T-cell (primary cell): ENCODE measurements at regions of chr5 and their contacts with region 1.

Region 1: GRCh38 chr5:35651002-35651756 is 33.5 kb downstream of the SPEF2 start:
- DNase-seq: peak; percentile 15 to 79 (median 58)
- ATAC-seq: peak; percentile 86 to 96 (median 94)
- H3K4me3 ChIP-seq: no peak overlapping the region
- H3K4me3 Mint-ChIP-seq: no peak overlapping the region
- H3K27ac ChIP-seq: no peak overlapping the region
- H3K27ac Mint-ChIP-seq: peak overlapping the region; percentile 45 to 66
- H3K4me1 ChIP-seq: peaks cover 0 to 4% of the 10 kb centered on the region in 2 experiments
- H3K4me1 Mint-ChIP-seq: peaks cover 6 to 9% (median 8%) of the 10 kb centered on the region in 3 donors
- H3K27me3 ChIP-seq: no peaks in the 10 kb centered on the region
- H3K27me3 Mint-ChIP-seq: no peaks in the 10 kb centered on the region

Region 2: DNA sequence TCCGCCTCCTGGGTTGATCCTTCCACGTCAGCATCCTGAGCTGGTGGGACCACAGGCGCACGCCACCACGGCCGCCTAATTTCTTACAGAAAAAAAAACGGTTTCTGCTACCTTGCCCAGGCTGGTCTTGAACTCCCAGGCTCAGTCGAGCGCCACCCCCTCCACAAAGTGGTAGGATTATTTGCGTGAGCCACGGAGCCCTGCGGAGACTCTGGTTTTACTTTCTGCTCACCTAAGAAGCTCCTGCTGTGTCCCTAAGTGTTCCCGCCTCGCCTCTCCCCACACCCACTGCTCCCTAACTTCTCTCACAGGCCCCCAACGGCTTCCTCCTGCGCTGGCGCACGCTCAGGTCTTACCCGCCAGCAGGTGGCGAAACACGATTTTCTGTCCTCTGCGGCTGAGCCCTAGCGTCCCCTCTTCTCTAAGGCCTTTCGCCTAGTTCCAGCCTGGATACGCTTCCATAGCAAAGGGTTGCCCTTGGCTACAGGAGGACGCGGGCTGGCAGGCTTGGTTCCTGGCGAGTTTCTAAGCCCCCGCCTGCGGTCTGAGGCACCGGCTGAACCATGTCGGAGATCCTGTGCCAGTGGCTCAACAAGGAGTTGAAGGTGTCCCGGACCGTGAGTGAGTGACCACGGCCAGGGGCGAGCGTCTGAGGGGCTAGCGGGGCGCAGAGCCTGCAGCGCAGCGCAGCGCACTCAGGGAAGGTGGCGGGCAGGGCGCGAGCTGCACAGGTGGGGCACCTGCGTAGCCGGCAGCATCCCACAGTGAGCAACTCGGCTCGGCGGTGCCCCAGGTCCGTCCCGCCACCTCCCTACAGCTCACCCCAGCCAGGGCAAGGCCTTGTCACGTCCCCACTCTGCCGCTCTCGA is 33.5 kb before region 1 on chr5 and contains the start of gene SPEF2:
- CTCF ChIA-PET with region 1: interaction called, 3 to 11 read pairs
- POLR2A ChIA-PET with region 1: no interaction called
- DNase-seq: peak; percentile 61 to 86 (median 71)
- ATAC-seq: peak; percentile 89 to 91 (median 90)
- H3K4me3 ChIP-seq: peak within 1 kb of the TSS; percentile 87 to 96
- H3K4me3 Mint-ChIP-seq: peak within 1 kb of the TSS; percentile 92 to 97 (median 96)
- H3K27ac ChIP-seq: peak within 1 kb of the TSS; percentile 71
- H3K27ac Mint-ChIP-seq: peak within 1 kb of the TSS; percentile 92 to 96
- H3K4me1 ChIP-seq: peaks cover 6 to 13% of the 10 kb centered on the region in 2 experiments
- H3K4me1 Mint-ChIP-seq: peaks cover 25 to 38% (median 29%) of the 10 kb centered on the region in 3 donors
- H3K27me3 ChIP-seq: peaks cover 0 to 6% of the 10 kb centered on the region in 2 experiments
- H3K27me3 Mint-ChIP-seq: peaks cover 0 to 4% of the 10 kb centered on the region in 2 donors
- total RNA-seq, gene SPEF2: 6.0 to 12.3 (median 11.3) TPM

Region 3: DNA sequence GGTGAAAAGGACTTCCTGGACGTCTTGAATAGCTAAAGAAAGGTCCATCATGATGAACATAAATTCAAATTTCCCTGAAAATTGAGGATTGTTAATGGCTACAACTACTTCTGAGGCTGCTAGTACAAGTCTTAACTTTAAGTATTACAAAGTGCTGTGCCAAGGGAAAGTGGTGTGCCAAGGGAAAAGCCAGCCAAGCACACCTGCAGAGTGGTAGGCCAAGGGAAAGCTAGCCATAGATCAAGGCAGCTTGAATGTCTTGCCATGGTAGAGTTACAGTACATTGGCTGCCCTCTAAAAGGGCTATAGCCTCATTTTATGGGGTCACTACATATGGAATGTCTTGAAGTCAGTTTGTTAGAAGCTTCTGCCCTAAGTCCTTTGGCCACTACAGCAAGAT is 30.7 kb after region 1 on chr5:
- CTCF ChIA-PET with region 1: no interaction called
- POLR2A ChIA-PET with region 1: no interaction called
- DNase-seq: no peak
- ATAC-seq: no peak
- H3K4me3 ChIP-seq: no peak overlapping the region
- H3K4me3 Mint-ChIP-seq: no peak overlapping the region
- H3K27ac ChIP-seq: no peak overlapping the region
- H3K27ac Mint-ChIP-seq: no peak overlapping the region
- H3K4me1 ChIP-seq: peaks cover 7 to 9% of the 10 kb centered on the region in 2 experiments
- H3K4me1 Mint-ChIP-seq: peaks cover 14 to 23% (median 14%) of the 10 kb centered on the region in 3 donors
- H3K27me3 ChIP-seq: no peaks in the 10 kb centered on the region
- H3K27me3 Mint-ChIP-seq: no peaks in the 10 kb centered on the region